CD4-positive, alpha-beta T cell (primary cell): ENCODE measurements at regions of chr1 and their contacts with region 1.

Region 1: DNA sequence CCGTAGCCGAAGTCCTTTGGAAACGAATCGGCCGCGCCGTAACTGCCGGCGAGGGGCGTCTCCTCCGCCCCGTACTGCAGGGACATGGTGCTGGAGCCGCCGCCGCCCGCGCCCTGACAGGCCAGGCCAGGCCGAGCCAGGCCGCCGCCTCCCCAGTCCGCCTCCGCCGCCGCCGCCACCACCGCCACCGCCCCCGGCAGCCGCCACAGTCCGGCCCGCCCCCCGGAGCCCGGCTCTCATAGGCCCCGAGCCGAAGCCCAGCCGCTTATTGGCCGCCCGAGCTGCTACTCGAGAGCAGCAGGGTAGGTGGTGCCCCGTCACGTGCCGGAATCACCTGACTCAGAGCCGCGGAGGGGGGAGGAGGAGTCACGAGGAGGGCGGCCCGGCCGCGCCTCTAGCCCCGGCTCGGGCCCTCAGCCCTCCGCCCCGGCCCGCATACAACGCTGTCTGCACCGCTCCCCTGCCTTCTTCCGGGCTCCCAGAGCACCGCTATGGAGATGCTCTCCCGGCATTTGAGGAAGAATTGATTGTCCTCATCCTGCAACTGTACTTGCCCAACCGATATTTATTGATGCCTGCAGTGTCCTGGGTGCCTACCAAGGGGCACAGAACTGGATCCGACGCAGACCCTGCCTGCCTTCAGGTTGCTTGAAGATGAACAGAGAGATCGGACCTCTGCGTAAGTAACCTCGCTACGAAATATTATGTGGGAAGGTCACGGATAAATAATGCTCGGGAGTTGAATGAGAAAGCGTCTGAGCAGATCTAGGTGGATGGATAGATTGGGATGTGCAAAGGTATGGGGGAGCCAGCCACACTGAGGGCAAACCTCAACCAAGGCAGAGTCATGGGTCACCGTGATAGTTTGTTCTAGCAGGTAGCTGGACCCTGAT is at the start of gene RRAGC:
- DNase-seq: peak; percentile 95 to 99 (median 98)
- ATAC-seq: peak; percentile 98
- H3K4me3 ChIP-seq: peak within 1 kb of the TSS; percentile 85
- H3K4me3 Mint-ChIP-seq: peak within 1 kb of the TSS; percentile 96
- H3K27ac ChIP-seq: peak within 1 kb of the TSS; percentile 10 to 58
- H3K27ac Mint-ChIP-seq: peak within 1 kb of the TSS; percentile 89
- H3K4me1 ChIP-seq: peaks cover 31% of the 10 kb centered on the region
- H3K4me1 Mint-ChIP-seq: peaks cover 73% of the 10 kb centered on the region
- H3K27me3 ChIP-seq: no peaks in the 10 kb centered on the region
- H3K27me3 Mint-ChIP-seq: no peaks in the 10 kb centered on the region
- CTCF ChIP-seq: no peak
- total RNA-seq, gene RRAGC: 9.2 to 11.4 TPM

Region 2: DNA sequence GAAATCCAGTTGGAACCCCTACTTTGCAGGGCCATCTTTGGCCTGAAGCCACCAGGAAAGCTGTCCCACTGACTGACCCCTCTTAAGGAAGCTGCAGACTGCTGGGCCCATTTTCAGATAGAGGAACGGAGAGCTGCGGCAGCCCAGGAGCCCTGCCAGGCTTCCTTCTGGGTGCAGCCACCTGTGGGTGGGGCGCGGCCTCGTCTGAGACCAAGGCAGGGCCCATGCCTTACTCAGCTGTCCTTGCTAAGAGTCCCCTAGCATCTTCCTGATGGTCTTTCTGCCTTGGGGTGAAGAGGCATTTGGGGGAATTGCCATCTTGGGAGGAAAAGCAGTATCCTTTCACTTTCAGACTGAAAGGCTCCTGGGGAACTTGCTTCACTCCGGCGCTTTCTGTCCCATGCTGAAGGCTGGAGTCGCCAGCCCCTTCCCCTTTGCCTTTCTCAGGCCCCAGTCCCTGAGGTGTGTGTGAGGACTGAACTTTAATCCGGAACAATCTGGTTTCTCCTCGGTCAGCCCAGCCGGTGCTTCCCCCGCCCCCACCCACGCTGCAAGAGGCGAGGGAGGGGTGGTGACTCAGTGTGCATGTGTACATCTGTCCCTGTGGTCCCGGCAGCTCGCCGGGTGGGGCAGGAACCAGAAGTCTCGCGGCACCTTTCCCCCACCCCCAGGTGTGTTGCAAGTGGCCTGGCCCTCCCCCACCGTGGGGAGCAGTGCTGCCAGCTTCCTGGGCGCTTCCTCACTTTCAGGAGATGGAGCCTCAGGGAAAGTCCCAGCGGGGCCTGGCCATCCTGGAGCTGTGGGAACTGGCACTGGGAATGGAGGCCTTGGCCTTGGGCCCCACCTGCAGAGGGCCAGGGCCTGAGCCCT is 1380.3 kb before region 1 on chr1:
- CTCF ChIA-PET with region 1: no interaction called
- POLR2A ChIA-PET with region 1: no interaction called
- intact Hi-C with region 1: loop called in 1 of 2 experiments (anchors 5 kb)
- DNase-seq: peak; percentile 63 to 96 (median 89)
- ATAC-seq: peak; percentile 57
- H3K4me3 ChIP-seq: peak overlapping the region; percentile 92
- H3K4me3 Mint-ChIP-seq: peak overlapping the region; percentile 97
- H3K27ac ChIP-seq: peak overlapping the region; percentile 95 to 97
- H3K27ac Mint-ChIP-seq: peak overlapping the region; percentile 100
- H3K4me1 ChIP-seq: peaks cover 67% of the 10 kb centered on the region
- H3K4me1 Mint-ChIP-seq: peaks cover 56% of the 10 kb centered on the region
- H3K27me3 ChIP-seq: no peaks in the 10 kb centered on the region
- H3K27me3 Mint-ChIP-seq: no peaks in the 10 kb centered on the region
- CTCF ChIP-seq: no peak

Region 3: GRCh38 chr1:38990738-38991639 is 131.2 kb after region 1 on chr1 and contains the start of gene AKIRIN1:
- CTCF ChIA-PET with region 1: no interaction called
- POLR2A ChIA-PET with region 1: interaction called, 3 read pairs
- intact Hi-C with region 1: loop called (anchors 1 to 2 kb)
- DNase-seq: peak; percentile 82 to 96 (median 92)
- ATAC-seq: peak; percentile 84
- H3K4me3 ChIP-seq: peak within 1 kb of the TSS; percentile 91
- H3K4me3 Mint-ChIP-seq: peak within 1 kb of the TSS; percentile 90
- H3K27ac ChIP-seq: peak within 1 kb of the TSS; percentile 83 to 89
- H3K27ac Mint-ChIP-seq: peak within 1 kb of the TSS; percentile 81
- H3K4me1 ChIP-seq: peaks cover 36% of the 10 kb centered on the region
- H3K4me1 Mint-ChIP-seq: peaks cover 43% of the 10 kb centered on the region
- H3K27me3 ChIP-seq: no peaks in the 10 kb centered on the region
- H3K27me3 Mint-ChIP-seq: no peaks in the 10 kb centered on the region
- CTCF ChIP-seq: no peak
- total RNA-seq, gene AKIRIN1: 108 to 112 TPM

Region 4: DNA sequence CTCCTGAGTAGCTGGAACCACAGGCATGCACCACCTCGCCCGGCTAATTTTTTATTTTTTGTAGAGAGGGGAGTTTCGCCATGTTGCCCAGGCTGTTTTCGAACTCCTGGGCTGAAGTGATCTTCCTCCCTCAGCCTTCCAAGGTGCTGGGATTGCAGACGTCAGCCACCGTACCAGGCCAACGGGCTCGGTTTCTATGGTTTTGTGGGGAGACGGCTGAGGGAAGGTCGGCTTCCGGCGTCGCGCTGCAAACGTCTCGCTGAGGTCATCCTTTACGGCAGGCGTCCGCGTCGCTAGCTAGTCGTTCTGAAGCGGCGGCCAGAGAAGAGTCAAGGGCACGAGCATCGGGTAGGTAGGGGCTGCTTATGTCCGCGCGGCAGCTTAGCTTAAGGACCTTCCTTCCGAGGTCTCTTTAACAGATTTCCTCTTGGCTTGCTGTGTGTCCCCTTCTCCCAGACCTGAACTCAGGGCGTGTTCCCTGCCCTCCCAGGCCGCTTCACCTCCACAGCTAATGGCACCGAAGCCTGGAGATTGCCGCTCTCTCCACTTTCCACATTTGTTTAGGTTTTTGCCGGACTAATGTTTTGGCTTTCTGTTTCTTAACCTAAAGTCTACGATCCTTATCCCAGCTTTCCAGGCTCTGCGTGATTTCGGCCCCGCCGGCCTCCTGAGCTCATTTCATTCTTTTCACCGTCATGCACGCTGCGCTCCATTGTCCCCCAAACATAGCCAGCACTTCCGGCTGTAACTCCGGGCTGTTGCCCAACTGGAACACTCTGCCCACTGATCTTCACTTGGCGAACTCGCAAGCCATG is 166.5 kb after region 1 on chr1 and contains the start of gene NDUFS5:
- CTCF ChIA-PET with region 1: interaction called, 3 read pairs
- POLR2A ChIA-PET with region 1: interaction called, 15 read pairs
- intact Hi-C with region 1: loop called (anchors 1 to 5 kb)
- DNase-seq: peak; percentile 65 to 92 (median 78)
- ATAC-seq: peak; percentile 88
- H3K4me3 ChIP-seq: peak within 1 kb of the TSS; percentile 66
- H3K4me3 Mint-ChIP-seq: peak within 1 kb of the TSS; percentile 94
- H3K27ac ChIP-seq: peak within 1 kb of the TSS; percentile 73 to 86
- H3K27ac Mint-ChIP-seq: peak within 1 kb of the TSS; percentile 96
- H3K4me1 ChIP-seq: peaks cover 33% of the 10 kb centered on the region
- H3K4me1 Mint-ChIP-seq: peaks cover 34% of the 10 kb centered on the region
- H3K27me3 ChIP-seq: no peaks in the 10 kb centered on the region
- H3K27me3 Mint-ChIP-seq: no peaks in the 10 kb centered on the region
- CTCF ChIP-seq: no peak
- total RNA-seq, gene NDUFS5: 153 to 156 TPM

Region 5: DNA sequence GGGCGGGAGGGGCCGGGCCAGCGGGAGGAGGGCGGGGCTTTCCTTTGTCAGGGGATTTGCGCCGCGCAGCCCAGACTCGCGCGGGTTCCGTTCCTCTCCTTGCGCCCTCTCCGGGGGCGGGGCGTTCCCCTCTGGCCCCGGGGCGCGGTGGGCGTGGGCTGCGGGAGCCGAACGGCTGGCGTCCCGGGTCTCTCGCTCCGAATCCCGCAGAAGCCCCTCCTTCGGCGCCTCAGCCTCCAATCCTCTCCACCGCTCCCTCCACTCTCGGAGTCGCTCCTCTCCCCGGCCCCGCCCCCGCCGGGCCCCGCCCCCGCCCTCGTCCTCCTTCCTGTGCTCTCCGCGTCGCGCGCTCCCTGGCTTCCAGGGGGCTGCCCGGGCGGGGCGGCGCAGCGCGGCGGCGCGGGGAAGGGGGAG is 548.8 kb after region 1 on chr1:
- CTCF ChIA-PET with region 1: no interaction called
- POLR2A ChIA-PET with region 1: no interaction called
- intact Hi-C with region 1: loop called in 1 of 2 experiments (anchors 10 kb)
- DNase-seq: peak; percentile 61 to 96 (median 79)
- ATAC-seq: peak; percentile 83
- H3K4me3 ChIP-seq: peak overlapping the region; percentile 61
- H3K4me3 Mint-ChIP-seq: peak overlapping the region; percentile 77
- H3K27ac ChIP-seq: peak overlapping the region in 1 of 2 donors; percentile 21
- H3K27ac Mint-ChIP-seq: no peak overlapping the region
- H3K4me1 ChIP-seq: peaks cover 40% of the 10 kb centered on the region
- H3K4me1 Mint-ChIP-seq: peaks cover 66% of the 10 kb centered on the region
- H3K27me3 ChIP-seq: no peaks in the 10 kb centered on the region
- H3K27me3 Mint-ChIP-seq: no peaks in the 10 kb centered on the region
- CTCF ChIP-seq: no peak